HAP-1 (cell line): ENCODE measurements at regions of chr11 and their contacts with region 1.

Region 1: GRCh38 chr11:41201156-41201555 is 258.3 kb downstream of the LRRC4C start:
- DNase-seq: peak; percentile 76 to 82
- H3K4me3 ChIP-seq: no peak overlapping the region
- H3K4me1 ChIP-seq: no peaks in the 10 kb centered on the region
- H3K27me3 ChIP-seq: peaks cover 8% of the 10 kb centered on the region

Region 2: GRCh38 chr11:40732132-40732531 is 469.0 kb before region 1 on chr11:
- in situ Hi-C with region 1: loop called (anchors 25 kb)
- DNase-seq: no peak
- H3K4me3 ChIP-seq: no peak overlapping the region
- H3K4me1 ChIP-seq: no peaks in the 10 kb centered on the region
- H3K27me3 ChIP-seq: no peaks in the 10 kb centered on the region

Region 3: DNA sequence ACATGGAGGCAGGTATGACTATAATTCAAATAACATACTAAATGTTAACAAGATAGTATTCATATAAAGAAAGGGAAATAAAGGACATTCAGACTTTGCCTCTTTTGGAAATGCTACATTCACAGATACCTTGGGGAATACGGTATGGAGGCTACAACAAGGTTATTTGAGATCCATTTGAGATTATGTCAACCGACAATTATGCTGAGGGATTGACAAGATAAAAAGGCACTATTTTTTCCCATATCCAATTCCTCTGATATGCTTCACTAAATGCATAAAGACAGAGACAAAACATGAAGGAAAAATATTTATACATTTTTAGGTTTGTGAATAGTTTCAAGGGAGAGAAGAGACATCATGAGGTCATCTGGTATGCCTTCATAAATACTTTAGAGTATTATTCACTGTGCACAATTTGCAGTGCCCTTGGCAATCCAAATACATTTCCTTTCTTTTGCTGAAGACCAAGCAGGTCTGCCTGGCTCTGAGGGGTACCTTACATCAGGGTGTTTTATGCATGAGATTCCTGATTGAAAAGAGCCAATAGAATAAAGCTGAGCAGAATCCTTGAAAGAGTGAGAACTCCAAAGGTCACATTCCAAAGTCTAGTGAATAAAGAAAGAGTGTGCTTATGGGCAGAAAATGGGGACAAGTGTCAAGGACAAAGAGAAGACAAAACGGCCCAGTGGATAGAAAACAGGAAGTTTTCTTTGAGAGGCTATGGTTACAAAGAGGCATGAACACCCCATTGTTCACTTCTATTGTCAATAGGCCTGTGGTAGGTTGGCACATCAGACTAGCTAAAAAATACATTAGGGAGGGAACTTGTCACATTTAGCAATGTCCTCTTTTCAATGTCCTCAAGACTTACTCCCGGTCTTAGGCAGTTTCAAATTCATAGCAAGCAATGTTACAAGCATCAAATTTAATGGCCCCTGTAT is 197.5 kb before region 1 on chr11:
- in situ Hi-C with region 1: no loop called
- DNase-seq: peak in 1 of 2 experiments; percentile 41
- H3K4me3 ChIP-seq: no peak overlapping the region
- H3K4me1 ChIP-seq: peaks cover 6% of the 10 kb centered on the region
- H3K27me3 ChIP-seq: no peaks in the 10 kb centered on the region

Region 4: DNA sequence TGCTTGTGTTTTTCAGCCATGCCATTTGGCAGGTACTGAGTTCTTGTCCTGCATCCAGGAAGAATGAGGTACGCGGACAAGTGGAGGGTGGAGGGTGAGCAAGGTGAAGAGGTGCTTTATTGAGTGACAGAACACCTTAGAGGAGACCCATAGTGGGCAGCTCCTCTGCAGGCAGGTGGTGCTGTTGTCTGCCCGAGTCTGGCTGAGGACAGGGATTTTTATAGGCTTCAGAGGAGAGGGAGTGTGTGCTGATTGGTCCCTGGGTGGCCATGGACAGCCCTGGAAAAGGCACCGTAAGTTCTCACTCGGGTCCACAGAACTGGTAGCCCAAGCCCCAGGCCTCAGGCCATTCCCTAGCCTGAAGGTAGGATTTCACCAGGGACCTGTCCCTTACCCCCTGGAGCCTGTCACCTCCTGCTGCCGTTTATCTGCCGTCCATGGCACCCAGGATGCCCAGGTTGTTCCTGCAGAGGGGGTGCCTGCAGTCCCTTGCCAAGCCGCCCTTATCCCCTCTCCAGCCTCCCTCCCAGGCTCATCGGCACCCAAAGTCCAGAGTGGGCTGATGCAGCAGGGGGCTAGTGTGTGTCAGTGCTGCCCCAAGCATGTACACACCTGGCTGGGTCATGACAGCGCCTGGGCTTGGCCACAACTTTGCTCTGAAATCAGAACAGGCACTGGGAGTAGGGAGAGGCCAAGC is 44.7 kb after region 1 on chr11:
- in situ Hi-C with region 1: no loop called
- DNase-seq: no peak
- H3K4me3 ChIP-seq: no peak overlapping the region
- H3K4me1 ChIP-seq: no peaks in the 10 kb centered on the region
- H3K27me3 ChIP-seq: peaks cover 8% of the 10 kb centered on the region; the same call in 1 of the 2 replicates